Activated CD4-positive, alpha-beta memory T cell treated with anti-CD3 and anti-CD28 coated beads, Interleukin-2, amount 10 ng/mL, durations not matched to agents 7 days and 5 days (primary cell): ENCODE measurements at regions of chr9 and their contacts with region 1.

Region 1: DNA sequence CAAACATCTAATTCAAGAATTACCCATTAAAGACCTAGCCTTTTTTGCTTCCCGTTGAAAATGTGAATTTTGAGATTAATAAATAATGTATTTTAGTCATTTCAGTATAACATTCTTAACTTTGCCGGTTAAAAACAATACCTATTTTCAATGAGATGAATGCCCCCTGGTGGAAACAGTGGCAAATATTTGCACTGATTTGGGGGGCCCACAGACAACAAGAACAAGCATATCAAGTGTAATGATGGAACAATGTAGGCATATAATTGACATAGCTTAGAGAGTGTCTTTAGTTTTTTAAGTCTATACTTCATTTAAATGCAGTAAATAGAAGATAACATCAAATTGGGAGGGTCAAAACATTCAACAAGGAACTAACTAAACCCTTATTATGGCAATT is 111.9 kb downstream of the NTRK2 start:
- DNase-seq: peak; percentile 29
- H3K4me3 Mint-ChIP-seq: no peak overlapping the region
- H3K27ac Mint-ChIP-seq: no peak overlapping the region
- H3K4me1 Mint-ChIP-seq: peaks cover 6% of the 10 kb centered on the region
- H3K27me3 Mint-ChIP-seq: peaks cover 20% of the 10 kb centered on the region

Region 2: GRCh38 chr9:84668196-84669012 is 113.1 kb before region 1 on chr9:
- CTCF ChIA-PET with region 1: interaction called, 18 read pairs
- POLR2A ChIA-PET with region 1: no interaction called
- DNase-seq: peak; percentile 59
- H3K4me3 Mint-ChIP-seq: peak overlapping the region; percentile 72
- H3K27ac Mint-ChIP-seq: peak overlapping the region; percentile 18
- H3K4me1 Mint-ChIP-seq: peaks cover 20% of the 10 kb centered on the region
- H3K27me3 Mint-ChIP-seq: peaks cover 65% of the 10 kb centered on the region

Region 3: DNA sequence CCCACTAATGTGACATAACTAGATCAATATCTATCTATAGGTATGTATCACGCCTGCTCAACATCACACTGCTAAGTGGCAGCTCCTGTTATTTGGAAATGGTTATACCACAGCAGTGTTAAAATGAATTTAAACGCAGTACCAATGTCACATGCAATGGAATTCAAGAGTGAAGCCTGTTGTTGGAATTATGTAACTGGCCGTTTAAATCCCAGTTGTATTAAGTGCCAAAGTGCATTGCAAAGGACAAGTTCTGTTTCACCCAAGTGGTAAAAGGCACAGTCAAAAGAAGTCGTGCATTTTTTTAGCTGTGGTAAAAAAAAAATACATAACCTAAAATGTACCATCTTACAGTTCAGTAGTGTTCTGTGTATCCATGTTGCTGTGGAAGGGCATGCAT is 107.7 kb before region 1 on chr9:
- CTCF ChIA-PET with region 1: interaction called, 18 read pairs
- POLR2A ChIA-PET with region 1: no interaction called
- DNase-seq: no peak
- H3K4me3 Mint-ChIP-seq: no peak overlapping the region
- H3K27ac Mint-ChIP-seq: no peak overlapping the region
- H3K4me1 Mint-ChIP-seq: peaks cover 10% of the 10 kb centered on the region
- H3K27me3 Mint-ChIP-seq: peaks cover 40% of the 10 kb centered on the region

Region 4: DNA sequence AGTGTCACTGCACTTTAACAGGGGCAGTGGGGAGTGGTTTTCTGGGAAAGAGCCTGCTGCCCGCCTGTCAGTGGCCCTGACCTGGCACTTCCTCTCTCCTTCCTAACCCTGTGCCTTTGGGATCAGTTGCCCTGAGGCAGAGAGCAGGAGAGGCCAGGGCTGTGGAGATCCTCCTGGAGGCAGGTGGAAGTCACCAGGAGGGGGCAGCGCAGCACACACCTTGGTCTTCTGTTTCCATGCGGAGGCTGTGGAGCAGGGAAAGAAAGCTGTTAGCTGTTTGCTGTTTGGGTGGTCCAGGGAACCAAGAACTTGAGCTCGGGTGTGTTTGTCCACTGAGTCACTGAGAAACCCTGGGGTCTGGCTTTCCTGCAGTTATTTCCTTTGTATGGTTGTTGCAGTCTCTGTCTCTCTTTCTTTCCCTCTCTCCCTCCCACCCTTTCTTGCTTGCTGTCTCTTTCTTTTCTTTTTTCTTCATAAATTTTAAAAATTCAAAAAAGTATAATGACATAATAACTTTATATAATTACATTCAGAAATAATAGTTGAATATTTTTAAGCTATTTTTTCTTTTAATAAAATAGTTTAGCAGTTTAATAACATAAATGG is 83.8 kb before region 1 on chr9:
- CTCF ChIA-PET with region 1: interaction called, 103 read pairs
- POLR2A ChIA-PET with region 1: interaction called, 3 read pairs
- DNase-seq: peak; percentile 69
- H3K4me3 Mint-ChIP-seq: no peak overlapping the region
- H3K27ac Mint-ChIP-seq: no peak overlapping the region
- H3K4me1 Mint-ChIP-seq: peaks cover 29% of the 10 kb centered on the region
- H3K27me3 Mint-ChIP-seq: peaks cover 3% of the 10 kb centered on the region

Region 5: DNA sequence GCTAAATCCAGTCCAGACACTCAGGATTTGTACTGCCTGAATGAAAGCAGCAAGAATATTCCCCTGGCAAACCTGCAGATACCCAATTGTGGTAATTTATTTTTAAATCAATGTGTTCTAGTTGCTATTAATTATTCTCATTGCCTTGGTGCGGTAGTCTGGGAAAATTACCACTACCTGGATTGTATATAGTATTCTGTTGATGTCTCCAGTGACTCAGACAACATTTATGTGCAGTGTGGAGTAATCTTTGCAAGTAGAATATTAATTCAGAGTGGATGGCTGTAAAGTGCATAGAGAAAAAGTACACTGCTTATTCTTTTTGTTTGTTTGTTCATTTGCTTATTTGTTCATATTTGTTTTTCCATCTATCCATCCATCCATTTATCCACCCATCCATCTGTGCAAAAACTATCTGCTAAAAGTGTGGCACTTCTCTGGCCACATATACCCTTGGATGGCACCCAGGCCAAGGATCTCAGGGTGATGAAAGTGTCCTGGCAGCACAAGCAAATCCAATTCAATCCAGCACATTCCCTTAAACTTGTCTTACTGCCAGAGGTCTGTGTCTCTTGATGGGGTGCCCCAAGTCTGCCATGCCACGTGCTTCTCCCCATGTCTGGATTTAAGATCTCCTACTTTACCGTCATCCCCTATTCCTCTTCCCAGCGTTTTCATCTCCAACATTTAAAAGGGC is 70.6 kb before region 1 on chr9:
- CTCF ChIA-PET with region 1: interaction called, 10 read pairs
- POLR2A ChIA-PET with region 1: interaction called, 3 read pairs
- DNase-seq: no peak
- H3K4me3 Mint-ChIP-seq: no peak overlapping the region
- H3K27ac Mint-ChIP-seq: no peak overlapping the region
- H3K4me1 Mint-ChIP-seq: peaks cover 51% of the 10 kb centered on the region
- H3K27me3 Mint-ChIP-seq: peaks cover 12% of the 10 kb centered on the region